Panc1 (cell line): ENCODE measurements at regions of chr16 and their contacts with region 1.

Region 1: DNA sequence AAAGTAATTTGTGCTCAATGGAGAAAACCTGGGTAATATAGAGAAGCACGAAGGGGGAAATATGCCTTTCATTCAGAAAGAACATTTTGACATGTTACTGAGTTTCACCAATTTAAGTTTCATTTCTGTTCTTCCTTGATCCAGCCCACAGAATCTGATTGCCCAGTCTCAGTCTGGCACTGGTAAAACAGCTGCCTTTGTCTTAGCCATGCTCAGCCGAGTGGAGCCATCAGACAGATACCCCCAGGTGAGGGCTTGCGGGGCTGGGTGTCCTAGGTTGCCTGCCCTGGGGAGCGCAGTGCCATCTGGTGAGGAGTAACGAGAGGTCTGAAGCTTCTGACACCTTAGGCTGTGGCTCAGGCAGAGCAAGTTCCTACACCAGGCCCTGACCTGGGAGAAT is 17.7 kb downstream of the DDX19A start:
- DNase-seq: no peak
- ATAC-seq: no peak
- H3K4me3 ChIP-seq: no peak overlapping the region
- H3K27ac ChIP-seq: no peak overlapping the region
- H3K4me1 ChIP-seq: no peaks in the 10 kb centered on the region
- H3K27me3 ChIP-seq: no peaks in the 10 kb centered on the region
- CTCF ChIP-seq: no peak

Region 2: DNA sequence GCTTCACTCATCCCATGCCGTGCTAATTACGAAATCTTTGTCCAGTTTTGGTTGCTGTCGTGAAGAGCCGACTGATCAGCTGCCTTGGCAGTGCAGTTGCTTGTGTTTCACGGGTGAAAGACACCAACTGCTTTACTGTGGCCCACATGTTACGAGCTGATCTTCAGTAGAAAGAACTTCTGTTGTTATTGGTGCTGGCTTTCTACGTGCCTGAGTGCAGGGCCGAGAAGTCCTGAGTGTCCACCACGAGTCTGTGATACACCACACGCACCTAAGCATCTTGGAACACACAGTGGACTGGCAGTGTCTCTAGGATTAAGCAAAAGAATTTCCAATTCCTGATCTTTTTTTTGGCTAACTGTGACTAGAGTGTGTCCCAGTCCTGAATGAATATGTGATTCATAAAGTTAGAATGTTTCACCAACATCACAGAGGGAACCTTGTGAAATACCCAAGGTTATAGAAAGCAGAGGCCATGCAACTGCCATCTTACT is 483.7 kb before region 1 on chr16:
- CTCF ChIA-PET with region 1: no interaction called
- POLR2A ChIA-PET with region 1: no interaction called
- in situ Hi-C with region 1: no loop called
- intact Hi-C with region 1: no loop called
- DNase-seq: no peak
- ATAC-seq: no peak
- H3K4me3 ChIP-seq: no peak overlapping the region
- H3K27ac ChIP-seq: no peak overlapping the region
- H3K4me1 ChIP-seq: no peaks in the 10 kb centered on the region
- H3K27me3 ChIP-seq: no peaks in the 10 kb centered on the region
- CTCF ChIP-seq: no peak

Region 3: DNA sequence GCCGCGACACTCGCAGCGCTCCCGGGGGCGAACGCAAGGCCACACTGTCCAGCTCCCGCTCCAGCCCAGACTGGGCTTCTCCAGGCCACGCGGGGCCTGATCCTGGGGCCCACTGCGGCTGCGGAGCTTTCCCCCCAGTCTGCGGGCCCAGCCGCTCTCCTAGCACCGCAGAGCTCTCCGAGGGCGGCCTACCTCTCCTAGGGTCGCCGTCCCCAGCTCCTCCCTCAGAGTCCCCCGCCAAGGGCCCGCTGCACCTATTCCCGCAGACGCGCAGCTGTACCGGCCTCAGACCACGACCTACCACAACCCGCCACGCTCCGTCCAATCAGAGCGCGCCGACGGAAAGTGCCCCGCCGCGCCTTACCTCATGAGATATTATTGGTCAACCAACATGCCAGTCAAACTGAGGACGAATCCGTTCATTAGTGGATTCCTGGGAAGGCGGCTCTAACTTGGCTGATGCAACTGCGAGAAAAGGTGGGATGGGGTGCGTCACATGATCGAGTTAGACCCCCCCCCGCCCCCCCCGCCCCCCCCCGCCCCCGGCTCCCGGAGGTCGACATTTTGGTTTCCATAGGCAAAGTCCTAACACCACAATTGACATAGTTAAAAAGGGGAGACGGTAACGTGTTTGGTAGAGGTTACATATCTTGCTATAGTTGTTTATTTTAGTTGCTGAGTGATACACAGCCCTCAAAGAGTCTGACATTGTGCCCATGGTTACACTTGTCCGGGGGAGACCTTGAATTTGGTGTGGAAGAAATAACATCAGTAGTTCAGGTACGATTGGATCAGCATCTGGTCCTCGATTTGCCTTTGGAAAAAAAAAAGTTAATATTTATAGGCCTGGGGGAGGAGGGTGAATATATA is 74.9 kb before region 1 on chr16 and contains the start of gene AARS1:
- CTCF ChIA-PET with region 1: no interaction called
- POLR2A ChIA-PET with region 1: interaction called, 11 read pairs
- in situ Hi-C with region 1: no loop called
- intact Hi-C with region 1: no loop called
- DNase-seq: peak; percentile 92
- ATAC-seq: peak; percentile 99
- H3K4me3 ChIP-seq: peak within 1 kb of the TSS; percentile 79 to 94
- H3K27ac ChIP-seq: peak within 1 kb of the TSS; percentile 98
- H3K4me1 ChIP-seq: peaks cover 3% of the 10 kb centered on the region; the same call in 1 of the 2 replicates
- H3K27me3 ChIP-seq: no peaks in the 10 kb centered on the region
- CTCF ChIP-seq: no peak
- total RNA-seq, gene AARS1: 115 TPM